ENCODE measurements at regions of chr1 and their contacts with region 1.

Region 1: DNA sequence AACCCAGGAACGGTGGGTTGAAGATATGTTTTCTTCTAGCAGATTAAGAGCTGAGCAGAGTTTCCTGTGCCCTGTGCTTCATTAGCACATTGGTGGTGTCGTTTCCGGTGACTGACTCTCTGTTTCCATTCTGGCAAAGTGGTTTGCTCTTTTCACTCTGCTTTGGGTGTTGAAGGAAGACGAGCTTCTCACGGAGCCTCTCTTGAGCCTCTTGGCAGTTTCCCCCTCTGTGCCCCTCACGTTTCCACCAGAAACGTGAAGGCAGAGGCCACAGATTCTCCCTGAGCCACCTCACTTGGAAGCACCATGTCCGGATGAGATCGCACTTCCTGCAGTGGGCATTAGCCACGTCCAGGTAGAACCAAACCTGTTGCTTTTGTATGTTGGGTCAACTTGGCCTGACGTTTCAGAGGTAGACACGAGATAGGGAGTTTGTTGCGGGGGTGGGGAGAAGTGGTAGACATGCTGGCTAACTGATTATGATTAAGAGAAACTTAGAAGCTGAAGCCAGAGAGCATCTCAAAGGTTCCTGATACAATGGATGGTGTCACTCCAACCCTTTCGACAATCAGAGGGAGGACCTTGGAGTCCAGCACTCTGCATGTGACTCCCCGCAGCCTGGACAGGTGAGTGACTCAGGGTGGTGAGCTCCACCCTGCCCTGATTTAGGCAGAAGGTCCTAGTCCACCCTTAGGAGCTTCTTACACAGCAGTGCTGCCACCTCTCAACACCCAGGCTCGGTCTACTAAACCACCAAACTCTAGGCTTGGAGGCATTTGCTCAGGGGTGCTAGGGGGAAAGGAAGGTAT is at the start of gene LAX1:
- DNase-seq: peak; percentile 90
- ATAC-seq: peak; percentile 86
- H3K4me3 Mint-ChIP-seq: peak within 1 kb of the TSS; percentile 90
- H3K27ac Mint-ChIP-seq: peak within 1 kb of the TSS; percentile 99
- H3K4me1 Mint-ChIP-seq: peaks cover 50% of the 10 kb centered on the region
- H3K27me3 Mint-ChIP-seq: no peaks in the 10 kb centered on the region
- total RNA-seq, gene LAX1: 14.5 to 15.5 TPM

Region 2: GRCh38 chr1:203720262-203720661 is 45.0 kb before region 1 on chr1:
- CTCF ChIA-PET with region 1: no interaction called
- POLR2A ChIA-PET with region 1: interaction called, 11 read pairs
- DNase-seq: no peak
- ATAC-seq: no peak
- H3K4me3 Mint-ChIP-seq: no peak overlapping the region
- H3K27ac Mint-ChIP-seq: no peak overlapping the region
- H3K4me1 Mint-ChIP-seq: no peaks in the 10 kb centered on the region
- H3K27me3 Mint-ChIP-seq: no peaks in the 10 kb centered on the region

Region 3: DNA sequence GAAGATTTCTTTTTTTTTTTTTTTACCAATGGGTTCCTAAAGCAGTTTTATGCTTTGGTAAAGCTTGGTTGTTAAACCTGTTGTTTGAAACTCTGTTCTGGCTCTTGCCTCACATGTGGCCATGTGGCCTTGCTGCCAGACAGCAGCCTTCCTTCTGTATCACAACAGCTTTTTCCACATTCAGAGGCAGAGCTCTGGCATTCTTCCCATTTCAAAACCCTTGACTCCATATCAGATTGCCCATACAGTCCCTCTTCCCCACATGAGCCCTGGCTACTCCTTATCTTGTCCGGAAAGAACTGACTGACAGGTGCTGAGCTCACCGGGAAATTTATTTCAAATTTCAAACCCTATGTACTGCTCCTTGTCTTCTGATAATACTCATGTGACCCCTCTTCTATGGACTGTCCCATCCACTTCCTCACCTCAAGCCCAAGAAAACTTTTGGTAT is 38.8 kb before region 1 on chr1:
- CTCF ChIA-PET with region 1: no interaction called
- POLR2A ChIA-PET with region 1: interaction called, 11 read pairs
- DNase-seq: no peak
- ATAC-seq: no peak
- H3K4me3 Mint-ChIP-seq: no peak overlapping the region
- H3K27ac Mint-ChIP-seq: no peak overlapping the region
- H3K4me1 Mint-ChIP-seq: peaks cover 3% of the 10 kb centered on the region
- H3K27me3 Mint-ChIP-seq: no peaks in the 10 kb centered on the region

Region 4: DNA sequence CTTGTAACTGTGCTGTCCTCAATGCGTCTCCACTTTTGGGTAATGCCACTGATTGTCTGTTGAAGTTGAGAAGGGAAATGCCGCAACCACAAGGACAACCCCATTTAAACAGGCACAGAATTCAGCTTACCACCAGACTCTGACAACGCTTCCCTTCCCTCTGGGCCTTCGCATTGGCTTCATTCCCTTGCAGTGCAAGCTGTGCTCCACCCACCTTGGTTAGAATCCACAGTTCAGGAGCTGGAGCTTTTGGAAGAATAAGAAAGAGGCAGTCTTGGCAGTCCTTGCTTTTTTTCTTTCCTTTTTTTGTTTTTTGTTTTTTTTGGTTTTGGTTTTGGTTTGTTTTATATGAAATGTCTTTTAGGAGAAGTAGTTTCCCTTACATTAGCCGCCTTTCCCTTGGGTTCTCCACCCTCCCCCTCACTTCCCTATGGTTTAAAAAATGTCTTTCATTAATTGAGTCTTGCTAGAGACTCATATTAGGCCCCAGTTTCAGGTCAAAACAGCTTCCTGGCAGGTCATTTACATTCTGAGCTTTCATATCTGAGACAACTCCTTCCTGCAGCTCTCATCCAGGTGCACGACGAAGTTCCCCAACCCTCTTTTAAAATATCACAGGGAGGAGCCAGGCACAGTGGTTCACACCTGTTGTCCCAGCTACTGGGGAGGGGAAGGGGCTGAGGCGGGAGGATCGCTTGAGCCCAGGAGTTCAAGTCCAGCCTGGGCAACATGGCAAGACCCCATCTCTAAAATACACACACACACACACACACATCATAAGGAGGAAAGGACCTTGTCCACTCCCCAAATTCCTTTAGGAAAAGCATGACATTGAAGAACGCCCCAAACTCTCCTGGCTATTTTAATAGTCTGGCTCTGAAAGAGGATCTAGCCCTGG is 20.9 kb before region 1 on chr1:
- CTCF ChIA-PET with region 1: interaction called, 3 read pairs
- POLR2A ChIA-PET with region 1: interaction called, 19 read pairs
- DNase-seq: peak; percentile 33
- ATAC-seq: peak; percentile 72
- H3K4me3 Mint-ChIP-seq: peak overlapping the region; percentile 9
- H3K27ac Mint-ChIP-seq: peak overlapping the region; percentile 60
- H3K4me1 Mint-ChIP-seq: peaks cover 18% of the 10 kb centered on the region
- H3K27me3 Mint-ChIP-seq: no peaks in the 10 kb centered on the region

Region 5: GRCh38 chr1:203776636-203777035 is 11.4 kb after region 1 on chr1:
- CTCF ChIA-PET with region 1: interaction called, 4 read pairs
- POLR2A ChIA-PET with region 1: interaction called, 27 read pairs
- DNase-seq: no peak
- ATAC-seq: no peak
- H3K4me3 Mint-ChIP-seq: no peak overlapping the region
- H3K27ac Mint-ChIP-seq: peak overlapping the region; percentile 25
- H3K4me1 Mint-ChIP-seq: peaks cover 3% of the 10 kb centered on the region
- H3K27me3 Mint-ChIP-seq: no peaks in the 10 kb centered on the region

Region 6: DNA sequence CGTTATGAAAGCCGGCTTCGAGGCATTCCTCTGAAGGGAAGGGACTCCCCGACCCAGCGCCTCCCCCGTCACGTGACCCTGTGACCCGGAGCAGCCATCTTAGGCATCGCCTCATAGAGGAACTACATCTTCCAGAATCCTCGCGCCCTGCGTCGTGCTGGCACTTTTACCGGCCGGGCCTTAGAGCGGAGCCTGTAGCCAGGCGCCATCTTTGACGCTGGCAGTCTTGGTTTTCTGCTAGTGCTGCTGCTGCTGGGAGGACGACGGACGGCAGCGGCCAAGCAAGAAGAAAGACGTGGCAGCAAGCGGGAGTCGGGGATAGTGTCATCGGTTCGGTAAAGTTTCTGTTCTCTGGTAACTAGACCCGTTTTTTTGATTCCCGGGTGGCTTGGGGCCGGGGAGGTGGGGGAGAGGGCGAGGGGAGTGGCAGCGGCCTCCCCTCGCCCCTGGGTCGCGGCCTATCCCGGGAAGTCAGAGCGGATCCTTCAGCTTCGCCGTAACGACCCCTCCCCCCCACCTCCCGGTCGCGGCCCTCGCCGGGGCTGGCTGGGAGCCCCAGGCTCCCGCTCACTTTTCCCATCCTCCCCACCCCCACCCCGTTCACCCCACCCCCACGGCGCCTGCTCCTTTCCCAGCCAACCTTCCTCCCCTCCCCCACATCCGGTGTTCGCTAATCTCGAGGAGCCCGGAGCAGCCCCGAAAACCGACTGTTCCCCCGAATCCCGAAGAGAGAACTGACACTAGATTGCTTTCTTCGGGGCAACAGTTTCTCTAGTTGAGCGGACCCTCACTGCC is 30.4 kb after region 1 on chr1 and contains the starts of genes ZBED6 and ZC3H11A:
- CTCF ChIA-PET with region 1: interaction called, 6 read pairs
- POLR2A ChIA-PET with region 1: interaction called, 19 read pairs
- DNase-seq: peak; percentile 100
- ATAC-seq: peak; percentile 100
- H3K4me3 Mint-ChIP-seq: peak within 1 kb of the TSS; percentile 100
- H3K27ac Mint-ChIP-seq: peak within 1 kb of the TSS; percentile 98
- H3K4me1 Mint-ChIP-seq: peaks cover 44% of the 10 kb centered on the region
- H3K27me3 Mint-ChIP-seq: no peaks in the 10 kb centered on the region
- total RNA-seq, gene ZBED6: 16.3 to 18.4 TPM
- total RNA-seq, gene ZC3H11A: 79.0 to 84.0 TPM